AG04449 (cell line): ENCODE measurements at regions of chr4 and their contacts with region 1.

Region 1: GRCh38 chr4:4260253-4260652 is 12.2 kb upstream of the TMEM128 start:
- DNase-seq: peak; percentile 24
- H3K4me3 ChIP-seq: no peak overlapping the region
- CTCF ChIP-seq: peak; percentile 35

Region 2: DNA sequence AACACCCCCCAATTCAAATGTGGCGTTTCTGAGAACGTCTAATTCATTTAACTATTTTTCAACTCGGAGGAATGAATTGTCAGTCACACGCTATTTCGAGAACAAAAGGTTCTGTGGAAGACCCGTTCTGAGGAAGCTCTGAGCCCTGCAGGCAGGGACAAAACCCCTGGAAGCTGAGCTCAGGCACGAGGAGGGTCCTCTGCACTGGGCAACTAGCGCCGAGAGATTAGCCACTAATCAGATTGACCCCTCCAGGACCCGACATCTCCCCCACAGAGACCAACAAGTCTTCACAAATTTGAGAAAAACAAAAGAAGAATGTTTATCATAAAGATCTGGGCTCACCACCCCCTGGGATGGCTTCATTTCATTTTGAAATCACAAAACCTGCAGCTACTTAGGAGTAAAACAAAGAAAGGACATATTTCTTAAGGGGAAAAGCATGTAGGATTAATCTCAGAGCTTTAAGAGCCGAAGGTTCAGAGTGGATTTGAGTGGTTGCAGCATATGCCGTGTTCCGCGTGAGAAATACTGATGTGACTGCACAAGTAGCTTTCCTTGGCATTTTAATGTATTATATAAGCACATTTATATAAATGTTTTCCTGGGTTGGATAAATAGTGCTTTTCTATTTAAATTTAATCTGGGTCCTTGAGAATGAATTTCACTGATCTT is 452.3 kb before region 1 on chr4:
- CTCF ChIA-PET with region 1: no interaction called
- POLR2A ChIA-PET with region 1: no interaction called
- DNase-seq: no peak
- H3K4me3 ChIP-seq: no peak overlapping the region
- CTCF ChIP-seq: no peak

Region 3: DNA sequence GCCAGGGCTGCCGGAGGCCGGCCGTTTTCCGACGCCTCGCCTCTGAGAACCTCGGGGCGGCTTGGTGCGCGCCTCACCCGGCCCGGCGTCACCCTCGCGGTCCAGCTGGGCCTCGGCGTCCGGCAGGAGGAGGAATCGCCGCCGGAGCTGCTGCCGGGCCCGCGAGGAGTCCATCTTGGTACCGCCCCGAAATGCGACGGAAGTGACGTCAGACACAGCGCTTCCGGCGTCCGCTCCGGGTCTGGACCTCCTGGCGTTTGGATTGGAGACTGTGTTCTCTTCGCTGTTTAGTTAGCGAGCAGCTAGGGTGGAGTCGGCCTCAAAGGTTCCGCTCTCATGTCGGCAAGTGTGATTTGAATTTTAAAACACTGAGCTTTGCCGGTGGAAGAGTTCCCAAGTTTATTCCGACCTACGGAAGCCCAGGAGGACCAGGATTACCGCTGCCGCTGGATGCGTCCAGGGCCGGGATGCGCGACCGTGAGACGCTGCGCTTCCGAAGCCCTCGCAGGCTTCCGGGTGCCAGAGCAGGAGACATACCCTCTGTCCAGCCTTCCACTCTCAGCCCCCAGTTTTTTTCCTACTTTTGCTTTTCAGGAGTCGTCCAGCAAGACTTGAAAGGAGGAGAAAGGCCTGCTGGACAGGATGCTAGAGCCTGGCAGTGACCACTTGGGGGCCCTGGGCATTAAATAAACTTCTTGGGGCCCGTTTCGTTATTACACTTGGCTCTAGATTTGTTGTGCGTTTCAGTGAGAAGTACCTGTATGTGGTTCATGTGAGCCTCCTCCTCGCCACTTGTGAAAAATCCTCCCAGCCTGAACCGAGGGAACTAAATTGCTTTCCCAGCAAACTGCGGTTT is 12.0 kb before region 1 on chr4 and contains the start of gene TMEM128:
- CTCF ChIA-PET with region 1: interaction called, 54 read pairs
- POLR2A ChIA-PET with region 1: no interaction called
- DNase-seq: peak; percentile 55
- H3K4me3 ChIP-seq: peak within 1 kb of the TSS; percentile 77
- CTCF ChIP-seq: peak; percentile 3

Region 4: DNA sequence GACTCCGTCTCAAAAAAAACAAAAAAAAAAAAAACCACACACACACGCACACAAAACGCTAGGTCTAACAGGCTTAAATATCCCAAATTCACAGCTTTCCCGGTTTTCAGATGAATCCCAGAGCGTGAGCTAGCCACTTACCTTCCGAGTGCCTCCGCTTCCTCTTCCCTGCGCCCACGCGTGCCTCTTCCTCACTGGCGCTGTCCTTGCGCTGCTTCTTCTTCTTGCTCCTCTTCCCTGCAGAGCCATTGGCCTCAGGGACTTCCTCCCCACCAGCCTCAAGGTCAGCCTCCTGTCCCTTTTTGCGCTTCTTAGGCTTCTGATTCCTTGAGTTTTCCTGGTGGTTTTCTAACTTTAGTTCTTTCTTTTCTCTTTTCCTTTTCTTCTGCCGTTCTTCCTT is 14.0 kb after region 1 on chr4:
- CTCF ChIA-PET with region 1: interaction called, 10 read pairs
- POLR2A ChIA-PET with region 1: no interaction called
- DNase-seq: no peak
- H3K4me3 ChIP-seq: no peak overlapping the region
- CTCF ChIP-seq: no peak

Region 5: DNA sequence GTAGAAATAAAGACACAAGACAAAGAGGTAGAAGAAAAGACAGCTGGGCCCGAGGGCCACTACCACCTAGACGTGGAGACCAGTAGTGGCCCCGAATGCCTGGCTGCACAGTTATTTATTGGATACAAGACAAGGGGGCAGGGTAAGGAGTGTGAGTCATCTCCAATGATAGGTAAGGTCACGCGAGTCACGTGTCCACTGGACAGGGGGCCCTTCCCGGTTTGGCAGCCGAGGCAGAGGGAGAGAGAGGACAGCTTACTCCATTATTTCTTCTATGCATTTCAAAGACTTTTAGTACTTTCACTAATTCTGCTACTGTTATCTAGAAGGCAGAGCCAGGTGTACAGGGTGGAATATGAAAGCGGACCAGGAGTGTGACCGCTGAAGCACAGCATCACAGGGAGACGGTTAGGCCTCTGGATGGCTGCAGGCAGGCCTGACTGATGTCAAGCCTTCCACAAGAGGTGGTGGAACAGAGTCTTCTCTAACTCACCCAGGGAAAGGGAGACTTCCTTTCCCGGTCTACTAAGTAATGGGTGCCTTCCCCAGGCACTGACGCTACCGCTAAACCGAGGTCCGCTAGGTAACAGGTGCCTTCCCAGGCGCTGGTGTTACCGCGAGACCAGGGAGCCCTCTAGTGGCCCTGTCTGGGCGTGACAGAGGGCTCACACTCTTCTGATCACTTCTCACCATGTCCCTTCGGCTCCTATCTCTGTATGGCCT is 74.7 kb after region 1 on chr4:
- CTCF ChIA-PET with region 1: interaction called, 80 read pairs
- POLR2A ChIA-PET with region 1: no interaction called
- DNase-seq: no peak
- H3K4me3 ChIP-seq: no peak overlapping the region
- CTCF ChIP-seq: peak; percentile 82

Region 6: GRCh38 chr4:4430492-4431197 is 170.4 kb after region 1 on chr4:
- CTCF ChIA-PET with region 1: interaction called, 46 read pairs
- POLR2A ChIA-PET with region 1: no interaction called
- DNase-seq: peak; percentile 58
- H3K4me3 ChIP-seq: no peak overlapping the region
- CTCF ChIP-seq: peak; percentile 86

Region 7: DNA sequence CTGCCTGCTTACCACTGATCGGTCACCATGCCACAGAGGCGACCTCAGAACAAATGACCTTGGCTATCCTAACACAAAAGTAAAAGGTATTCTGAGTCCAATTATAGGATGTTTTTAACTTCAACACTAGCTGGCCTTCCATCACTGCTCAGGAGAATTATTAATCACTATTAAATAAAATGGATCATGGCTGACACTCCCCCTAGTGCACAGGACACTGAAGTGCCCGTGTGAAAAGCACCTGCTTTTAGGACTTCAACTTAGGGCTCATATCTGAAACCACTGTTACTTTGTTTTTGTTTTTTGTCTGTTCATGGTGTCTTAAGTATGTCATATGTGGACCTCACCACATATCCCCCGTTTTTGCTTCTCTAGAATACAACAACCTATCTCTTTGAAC is 247.7 kb after region 1 on chr4:
- CTCF ChIA-PET with region 1: no interaction called
- POLR2A ChIA-PET with region 1: no interaction called
- DNase-seq: no peak
- H3K4me3 ChIP-seq: no peak overlapping the region
- CTCF ChIP-seq: no peak